ENCODE measurements at regions of chrX and their contacts with region 1.

Region 1: DNA sequence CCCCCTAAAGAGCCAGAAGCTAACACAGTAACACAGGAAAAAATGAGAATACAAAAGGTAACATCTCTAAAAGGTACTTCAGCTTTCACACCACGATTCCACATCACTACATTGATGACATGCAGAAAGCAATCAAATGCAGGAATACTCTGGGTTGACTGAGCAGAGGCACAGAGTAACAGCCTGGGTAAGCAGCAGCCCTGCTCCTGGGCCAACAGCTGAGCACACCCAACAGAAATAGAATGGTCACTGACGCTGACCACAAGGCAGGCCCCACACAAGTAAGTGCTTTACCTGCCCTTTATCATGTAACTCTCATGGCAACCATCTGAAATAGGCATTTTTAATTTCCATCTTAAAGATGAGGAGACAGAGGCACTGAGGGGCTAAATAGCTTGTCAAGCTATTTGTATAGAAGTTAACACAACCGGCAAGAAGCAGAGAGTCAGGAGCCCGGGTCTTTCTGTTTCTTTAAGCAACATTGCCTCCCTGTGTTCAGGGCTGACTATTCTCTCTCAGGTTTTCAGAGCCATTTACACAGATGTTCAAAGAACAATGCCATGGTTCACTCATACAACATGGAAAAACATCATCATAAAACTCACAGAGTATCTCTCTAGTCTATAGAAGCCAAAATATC is 168.9 kb downstream of the ZNF674 start:
- DNase-seq: peak in 4 of 9 donors; percentile 18 to 31 (median 24)
- ATAC-seq: no peak
- H3K4me3 ChIP-seq: no peak overlapping the region
- H3K4me3 Mint-ChIP-seq: no peak overlapping the region
- H3K27ac ChIP-seq: no peak overlapping the region
- H3K27ac Mint-ChIP-seq: no peak overlapping the region
- H3K4me1 ChIP-seq: no peaks in the 10 kb centered on the region
- H3K4me1 Mint-ChIP-seq: peaks cover 0 to 4% (median 0%) of the 10 kb centered on the region in 7 donors
- H3K27me3 ChIP-seq: no peaks in the 10 kb centered on the region
- H3K27me3 Mint-ChIP-seq: peaks cover 0 to 7% (median 0%) of the 10 kb centered on the region in 5 donors

Region 2: GRCh38 chrX:45322382-45322781 is 1054.0 kb before region 1 on chrX:
- CTCF ChIA-PET with region 1: no interaction called
- POLR2A ChIA-PET with region 1: no interaction called
- intact Hi-C with region 1: loop called in 1 of 2 experiments (anchors 2 kb)
- DNase-seq: peak in 2 of 9 donors; percentile 4 to 14
- ATAC-seq: no peak
- H3K4me3 ChIP-seq: no peak overlapping the region
- H3K4me3 Mint-ChIP-seq: no peak overlapping the region
- H3K27ac ChIP-seq: no peak overlapping the region
- H3K27ac Mint-ChIP-seq: no peak overlapping the region
- H3K4me1 ChIP-seq: no peaks in the 10 kb centered on the region
- H3K4me1 Mint-ChIP-seq: peaks cover 0 to 2% (median 0%) of the 10 kb centered on the region in 7 donors
- H3K27me3 ChIP-seq: no peaks in the 10 kb centered on the region
- H3K27me3 Mint-ChIP-seq: peaks cover 0 to 11% (median 6%) of the 10 kb centered on the region in 5 donors

Region 3: DNA sequence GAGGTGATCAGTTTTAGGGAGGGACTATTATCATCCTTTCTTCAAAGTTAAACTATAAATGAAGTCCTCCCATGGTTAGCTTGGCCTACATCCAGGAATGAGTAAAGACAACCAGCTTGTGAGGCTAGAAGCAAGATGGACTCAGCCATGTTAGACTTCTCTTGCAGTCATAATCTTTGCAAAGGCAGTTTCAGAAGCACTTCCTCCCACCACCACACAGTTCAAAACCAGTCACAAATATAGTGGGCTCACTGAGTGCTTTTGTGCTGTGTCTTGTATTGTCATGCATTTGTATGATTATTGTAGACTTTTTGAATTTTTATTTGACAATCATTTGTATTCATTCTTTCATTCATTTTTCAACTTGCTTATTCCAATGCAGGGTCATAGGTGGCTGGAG is 35.7 kb before region 1 on chrX:
- CTCF ChIA-PET with region 1: no interaction called
- POLR2A ChIA-PET with region 1: no interaction called
- intact Hi-C with region 1: no loop called
- DNase-seq: no peak
- ATAC-seq: no peak
- H3K4me3 ChIP-seq: no peak overlapping the region
- H3K4me3 Mint-ChIP-seq: no peak overlapping the region
- H3K27ac ChIP-seq: no peak overlapping the region
- H3K27ac Mint-ChIP-seq: no peak overlapping the region
- H3K4me1 ChIP-seq: no peaks in the 10 kb centered on the region
- H3K4me1 Mint-ChIP-seq: peaks cover 0 to 3% (median 0%) of the 10 kb centered on the region in 7 donors
- H3K27me3 ChIP-seq: no peaks in the 10 kb centered on the region
- H3K27me3 Mint-ChIP-seq: peaks cover 0 to 3% (median 0%) of the 10 kb centered on the region in 5 donors

Measured in naive thymus-derived CD4-positive, alpha-beta T cell (primary cell).